Mammary epithelial cell (primary cell): ENCODE measurements at regions of chr4 and their contacts with region 1.

Region 1: DNA sequence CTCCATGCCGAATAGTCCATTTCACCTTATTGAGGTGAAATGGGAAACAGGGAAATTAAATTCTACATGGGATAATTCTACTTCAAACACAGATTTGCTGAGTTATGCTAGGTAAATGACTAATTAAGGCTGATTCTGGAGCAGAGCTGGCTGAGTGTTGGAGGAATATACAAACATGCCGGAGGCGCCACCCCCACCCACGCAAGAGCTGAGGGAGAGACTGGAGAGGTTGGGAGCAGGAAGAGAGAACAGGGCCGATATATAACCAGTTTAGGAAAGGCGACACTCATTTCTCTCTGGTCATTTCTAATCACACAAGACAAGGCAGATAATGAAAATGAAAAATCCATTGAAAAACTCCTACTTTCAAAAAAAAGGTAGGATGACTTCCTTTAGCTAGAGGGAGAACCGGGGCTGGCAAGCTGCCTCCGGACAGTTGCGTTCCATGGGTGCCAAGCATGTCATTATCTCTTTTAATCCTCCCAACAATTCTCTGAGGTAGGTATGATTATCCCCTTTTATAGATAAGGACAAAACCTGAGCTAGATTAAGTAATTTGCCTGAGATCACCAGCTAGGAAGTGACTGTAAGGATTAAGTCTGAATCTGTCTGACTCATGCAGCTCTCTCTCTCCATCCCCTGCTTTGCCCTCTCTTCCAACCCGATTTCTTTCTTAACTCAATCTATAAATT is 27.6 kb upstream of the CFAP299 start:
- DNase-seq: peak; percentile 77
- H3K4me3 ChIP-seq: peak overlapping the region; percentile 11 to 22 (median 19)
- H3K27ac ChIP-seq: peak overlapping the region; percentile 80
- H3K4me1 ChIP-seq: peaks cover 56% of the 10 kb centered on the region
- H3K27me3 ChIP-seq: no peaks in the 10 kb centered on the region
- CTCF ChIP-seq: no peak

Region 2: DNA sequence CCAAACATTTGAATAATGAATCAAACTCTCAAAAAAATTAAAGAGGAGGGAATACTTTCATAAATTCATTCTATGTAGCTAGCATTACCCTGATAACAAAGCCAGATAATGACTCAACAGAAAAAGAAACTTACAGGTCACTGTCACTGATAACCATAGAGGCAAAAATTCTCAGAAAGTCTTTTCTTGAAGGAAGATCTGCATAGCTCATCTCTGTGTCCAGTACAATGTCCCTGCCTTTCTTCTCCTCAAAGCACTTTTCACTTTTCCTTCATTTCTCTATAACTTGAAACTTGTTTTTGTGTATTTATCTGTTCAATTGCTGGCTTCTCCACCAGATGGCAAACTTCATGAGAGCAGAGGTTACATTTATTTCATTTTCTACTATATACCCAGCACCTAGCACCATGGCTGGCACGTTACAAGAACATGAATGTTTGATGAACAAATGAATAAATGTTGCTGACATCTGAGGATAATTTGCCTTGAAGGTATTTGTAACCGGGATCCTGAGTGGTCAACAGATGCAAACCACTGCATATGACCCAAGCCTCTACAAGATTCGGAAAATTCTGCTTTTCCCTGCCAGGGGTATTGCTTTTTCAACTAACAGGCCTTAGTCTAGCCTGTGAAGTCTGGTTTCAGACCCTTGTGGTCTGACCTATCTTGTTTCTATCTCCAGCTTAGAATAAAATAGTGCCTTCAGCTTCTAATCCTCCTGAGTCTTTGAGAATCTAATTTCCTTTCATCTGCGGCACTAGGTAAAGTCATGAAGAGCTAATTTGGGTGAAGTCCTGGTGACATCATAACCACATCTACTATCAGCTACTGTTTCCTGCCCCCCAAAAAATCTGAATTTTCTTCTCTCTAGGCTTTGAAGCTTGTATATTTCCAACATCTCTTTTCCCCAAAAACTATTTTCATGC is 182.4 kb before region 1 on chr4:
- CTCF ChIA-PET with region 1: no interaction called
- dilution Hi-C with region 1: no loop called
- in situ Hi-C with region 1: no loop called
- intact Hi-C with region 1: loop called (anchors 5 kb)
- DNase-seq: peak; percentile 31
- H3K4me3 ChIP-seq: peak overlapping the region; percentile 15 to 30 (median 22)
- H3K27ac ChIP-seq: peak overlapping the region; percentile 68
- H3K4me1 ChIP-seq: peaks cover 46% of the 10 kb centered on the region
- H3K27me3 ChIP-seq: no peaks in the 10 kb centered on the region
- CTCF ChIP-seq: peak; percentile 56 to 57

Region 3: DNA sequence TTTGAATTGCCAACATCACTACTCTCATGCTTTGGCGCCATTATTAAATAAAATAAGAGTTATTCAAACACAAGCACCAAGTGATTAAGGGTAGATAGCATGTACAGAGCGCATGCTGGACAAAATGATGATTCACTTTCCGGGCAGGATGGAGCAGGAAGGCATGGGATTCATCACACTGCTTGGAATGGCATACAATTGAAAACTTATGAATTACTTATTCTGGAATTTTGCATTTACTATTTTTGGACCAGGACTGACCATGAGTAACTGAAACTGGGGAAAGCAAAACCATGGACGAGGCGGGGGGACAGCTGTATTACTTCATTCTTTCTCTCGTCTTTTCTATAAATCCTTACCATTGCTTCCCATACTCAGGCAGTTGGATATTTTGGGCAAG is 69.9 kb before region 1 on chr4:
- CTCF ChIA-PET with region 1: no interaction called
- dilution Hi-C with region 1: no loop called
- in situ Hi-C with region 1: no loop called
- intact Hi-C with region 1: loop called (anchors 2 kb)
- DNase-seq: peak; percentile 96
- H3K4me3 ChIP-seq: no peak overlapping the region
- H3K27ac ChIP-seq: peak overlapping the region; percentile 93
- H3K4me1 ChIP-seq: peaks cover 47% of the 10 kb centered on the region
- H3K27me3 ChIP-seq: no peaks in the 10 kb centered on the region
- CTCF ChIP-seq: no peak

Region 4: DNA sequence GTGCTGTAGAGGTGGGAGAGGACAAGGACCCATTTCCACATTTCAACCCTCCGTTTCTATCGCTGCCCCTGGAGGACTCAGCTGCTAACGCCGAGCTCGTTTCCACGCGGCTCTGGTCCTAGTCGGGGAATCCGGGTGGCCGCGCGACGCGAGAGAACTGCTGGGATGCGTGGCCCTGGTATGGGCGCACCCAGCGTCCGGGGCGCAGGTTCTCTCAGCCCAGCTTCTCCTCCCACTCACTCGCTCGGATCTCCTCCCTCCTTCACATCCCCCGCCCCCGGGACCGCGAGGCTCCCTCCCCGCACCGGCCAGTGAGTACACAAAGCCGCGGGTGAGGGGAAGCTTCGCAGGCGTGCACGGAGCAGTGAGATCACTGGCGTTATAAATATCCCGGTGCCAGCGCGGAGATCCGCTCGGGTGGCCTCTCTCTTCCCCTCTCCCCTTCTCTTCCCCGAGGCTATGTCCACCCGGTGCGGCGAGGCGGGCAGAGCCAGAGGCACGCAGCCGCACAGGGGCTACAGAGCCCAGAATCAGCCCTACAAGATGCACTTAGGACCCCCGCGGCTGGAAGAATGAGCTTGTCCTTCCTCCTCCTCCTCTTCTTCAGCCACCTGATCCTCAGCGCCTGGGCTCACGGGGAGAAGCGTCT is 41.5 kb before region 1 on chr4 and contains the start of gene FGF5:
- CTCF ChIA-PET with region 1: no interaction called
- dilution Hi-C with region 1: no loop called
- in situ Hi-C with region 1: no loop called
- intact Hi-C with region 1: loop called (anchors 2 kb)
- DNase-seq: peak; percentile 90
- H3K4me3 ChIP-seq: peak within 1 kb of the TSS; percentile 63 to 79 (median 63)
- H3K27ac ChIP-seq: peak within 1 kb of the TSS; percentile 59
- H3K4me1 ChIP-seq: peaks cover 34% of the 10 kb centered on the region
- H3K27me3 ChIP-seq: no peaks in the 10 kb centered on the region
- CTCF ChIP-seq: no peak
- total RNA-seq, gene FGF5: 0.17 to 2.9 TPM

Region 5: GRCh38 chr4:80386281-80386926 is 78.5 kb after region 1 on chr4:
- CTCF ChIA-PET with region 1: no interaction called
- dilution Hi-C with region 1: no loop called
- in situ Hi-C with region 1: no loop called
- intact Hi-C with region 1: no loop called
- DNase-seq: no peak
- H3K4me3 ChIP-seq: no peak overlapping the region
- H3K27ac ChIP-seq: no peak overlapping the region
- H3K4me1 ChIP-seq: no peaks in the 10 kb centered on the region
- H3K27me3 ChIP-seq: no peaks in the 10 kb centered on the region
- CTCF ChIP-seq: no peak

Region 6: DNA sequence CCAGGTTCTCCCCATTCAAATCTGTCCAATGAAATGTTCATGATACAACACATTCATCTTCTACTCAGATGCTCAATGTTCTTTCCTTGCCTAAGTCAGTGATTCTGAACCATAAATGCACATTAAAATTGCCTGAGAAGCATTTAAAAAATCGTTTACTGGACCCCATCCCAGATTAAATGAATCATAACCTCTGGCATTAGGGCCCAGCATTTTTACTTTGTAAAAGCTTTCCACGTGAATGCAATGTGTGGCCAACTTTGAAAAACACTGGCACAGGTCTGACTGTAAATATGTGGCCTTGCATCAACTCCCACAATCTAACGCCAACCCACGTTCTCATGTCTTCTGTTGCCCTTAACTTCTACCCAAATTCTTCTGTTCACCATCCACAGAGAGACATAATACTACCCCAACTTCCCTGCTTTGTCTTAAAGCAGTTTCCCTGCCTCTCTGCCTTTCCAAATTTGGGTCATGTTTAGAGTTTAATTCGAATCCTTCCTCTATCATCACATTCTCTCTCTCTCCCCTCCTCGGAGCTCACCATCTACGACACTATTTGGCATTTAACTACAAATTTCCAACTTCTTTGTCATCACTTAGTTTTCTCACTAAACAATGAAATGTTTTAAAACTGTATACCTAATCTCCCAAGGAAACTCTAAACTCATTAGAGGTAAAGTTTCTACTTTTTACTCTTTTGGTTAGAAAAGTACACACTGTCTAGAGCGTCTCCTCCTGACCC is 828.4 kb after region 1 on chr4:
- CTCF ChIA-PET with region 1: no interaction called
- dilution Hi-C with region 1: no loop called
- in situ Hi-C with region 1: no loop called
- intact Hi-C with region 1: no loop called
- DNase-seq: no peak
- H3K4me3 ChIP-seq: no peak overlapping the region
- H3K27ac ChIP-seq: no peak overlapping the region
- H3K4me1 ChIP-seq: no peaks in the 10 kb centered on the region
- H3K27me3 ChIP-seq: no peaks in the 10 kb centered on the region
- CTCF ChIP-seq: no peak